AG04449 (cell line): ENCODE measurements at regions of chr4 and their contacts with region 1.

Region 1: DNA sequence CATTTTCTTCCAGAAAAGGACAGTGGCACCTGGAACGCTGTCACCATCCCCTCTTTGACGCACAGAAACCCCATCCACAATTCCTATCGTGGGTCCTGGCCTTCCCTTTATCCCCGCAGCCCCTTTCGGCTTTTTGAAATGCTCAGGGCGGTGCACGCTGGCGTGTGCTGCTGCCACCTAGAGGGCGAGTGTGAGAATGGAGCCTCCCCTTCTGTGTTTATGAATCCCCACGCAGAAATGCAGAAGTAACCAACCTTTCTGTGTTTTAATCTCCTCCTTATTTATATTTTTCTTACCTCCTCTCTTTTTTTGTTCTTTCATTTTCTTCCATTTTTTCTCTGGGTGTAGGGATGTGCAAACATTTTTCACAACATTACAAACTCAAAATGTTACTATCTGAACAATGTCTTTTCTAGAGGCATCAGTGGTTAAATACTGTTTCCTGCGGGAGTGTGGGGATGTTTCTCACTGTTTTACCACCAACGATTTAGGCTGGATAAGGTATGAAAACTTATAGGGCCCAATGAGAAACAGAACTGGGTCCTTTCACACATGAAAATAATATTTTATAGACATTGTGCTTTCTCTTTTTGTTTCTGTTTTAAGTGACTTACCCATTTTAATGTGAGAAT is 50.0 kb downstream of the TMA16 start:
- DNase-seq: no peak
- H3K4me3 ChIP-seq: peak overlapping the region; percentile 48
- CTCF ChIP-seq: peak; percentile 95

Region 2: DNA sequence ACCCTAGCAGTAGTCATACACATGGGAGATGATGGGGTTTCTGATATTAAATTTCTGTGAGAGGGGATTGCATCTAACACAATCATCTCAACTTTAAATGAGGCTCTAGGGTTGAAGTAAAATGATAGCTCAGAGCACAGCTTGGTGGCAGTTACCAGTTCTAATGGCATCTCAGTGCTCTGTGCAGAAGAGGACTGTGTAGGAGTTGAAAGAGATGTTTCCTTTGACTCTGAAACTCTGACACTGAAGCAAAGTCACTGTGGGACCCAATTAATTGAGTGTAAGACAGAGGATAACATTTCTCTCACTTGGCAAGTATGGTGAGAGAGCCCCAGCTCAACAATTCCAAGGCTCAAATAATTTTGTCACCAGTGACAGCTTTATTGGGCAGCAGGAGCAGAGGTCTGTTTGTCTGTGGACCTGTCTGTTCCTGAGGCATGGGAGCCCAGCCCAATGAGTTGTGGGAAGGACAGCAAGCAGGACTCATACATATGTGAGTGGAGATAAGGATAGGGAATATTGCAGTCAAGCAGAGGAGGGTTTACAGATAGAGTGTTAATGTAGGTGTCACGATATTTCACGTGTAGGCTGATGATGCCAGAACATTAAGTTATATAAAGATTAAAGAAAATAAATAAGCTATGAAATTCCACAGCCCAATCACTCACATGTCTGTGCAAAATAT is 301.1 kb before region 1 on chr4:
- CTCF ChIA-PET with region 1: no interaction called
- POLR2A ChIA-PET with region 1: no interaction called
- DNase-seq: no peak
- H3K4me3 ChIP-seq: no peak overlapping the region
- CTCF ChIP-seq: no peak

Region 3: GRCh38 chr4:163473576-163473975 is 70.9 kb before region 1 on chr4 and contains the start of gene TKTL2:
- CTCF ChIA-PET with region 1: interaction called, 19 read pairs
- POLR2A ChIA-PET with region 1: no interaction called
- DNase-seq: no peak
- H3K4me3 ChIP-seq: no peak within 1 kb of the TSS
- CTCF ChIP-seq: no peak

Region 4: DNA sequence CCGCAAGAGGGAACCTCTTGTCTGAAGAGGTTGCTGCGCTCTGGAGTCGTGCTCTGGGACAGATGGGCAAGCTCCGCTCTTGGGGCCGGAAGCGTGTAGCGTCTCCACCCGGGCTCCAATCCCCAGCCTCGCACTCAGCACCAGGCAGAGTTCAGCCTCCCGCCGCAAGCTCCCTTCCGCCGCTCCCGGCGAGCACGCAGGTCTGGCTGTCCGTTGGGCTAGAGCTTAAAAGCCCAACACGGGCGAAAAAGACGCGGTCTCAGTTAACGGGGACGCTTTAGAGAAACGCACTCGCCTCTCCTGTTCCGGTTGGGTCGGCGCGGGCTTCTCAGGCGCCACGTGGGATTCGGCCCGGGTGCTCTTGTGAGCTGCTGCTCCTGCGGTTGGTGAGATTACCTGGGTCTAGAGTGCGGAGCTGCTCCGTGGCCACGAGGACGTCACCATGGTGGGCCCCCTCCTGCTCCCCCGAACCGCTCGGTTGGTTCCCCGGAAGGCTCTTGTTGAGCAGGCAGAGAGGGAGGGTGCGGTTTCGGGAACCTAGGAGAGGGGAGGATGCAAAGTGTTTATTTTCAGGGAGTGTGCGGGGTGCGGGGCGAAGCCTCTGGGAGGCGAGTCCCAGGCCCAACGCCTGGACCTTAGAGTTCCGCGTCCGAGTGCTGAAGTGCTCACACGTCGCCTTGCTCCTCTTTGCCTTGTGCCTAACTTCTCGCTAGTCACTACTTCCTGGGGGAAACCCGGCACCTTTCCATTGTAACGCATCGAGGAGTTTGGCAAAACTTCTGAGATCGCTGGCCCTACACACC is 50.0 kb before region 1 on chr4 and contains the start of gene TMA16:
- CTCF ChIA-PET with region 1: interaction called, 59 read pairs
- POLR2A ChIA-PET with region 1: interaction called, 16 read pairs
- DNase-seq: peak; percentile 68
- H3K4me3 ChIP-seq: peak within 1 kb of the TSS; percentile 94
- CTCF ChIP-seq: no peak

Region 5: DNA sequence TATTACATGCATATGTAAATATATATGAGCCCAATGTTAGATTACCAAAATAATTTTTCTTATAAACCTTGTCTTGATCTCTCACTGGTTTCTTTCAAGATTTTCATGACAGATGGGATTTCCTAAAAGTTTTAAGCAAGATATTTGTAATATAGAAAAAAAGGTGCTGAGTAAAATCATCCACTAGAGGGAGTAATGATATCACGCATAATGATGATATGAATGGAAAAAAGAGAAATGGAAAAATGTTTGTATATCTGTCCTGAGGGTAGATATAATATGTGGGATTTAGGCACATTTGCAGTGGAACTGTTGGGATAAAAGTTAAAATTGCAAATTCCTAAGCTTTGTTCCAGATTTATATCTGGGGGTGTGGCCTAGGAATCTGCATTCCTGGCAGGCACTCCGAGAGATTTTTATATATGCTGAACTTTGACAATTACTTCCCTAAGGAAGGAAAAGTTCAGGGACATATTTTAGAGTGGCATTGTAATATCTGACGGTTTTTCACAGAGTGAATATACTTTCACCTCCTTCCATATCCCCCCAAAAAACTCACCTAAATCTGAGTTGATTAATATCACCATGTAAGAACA is 10.4 kb after region 1 on chr4:
- CTCF ChIA-PET with region 1: interaction called, 77 read pairs
- POLR2A ChIA-PET with region 1: no interaction called
- DNase-seq: no peak
- H3K4me3 ChIP-seq: no peak overlapping the region
- CTCF ChIP-seq: peak; percentile 32

Region 6: DNA sequence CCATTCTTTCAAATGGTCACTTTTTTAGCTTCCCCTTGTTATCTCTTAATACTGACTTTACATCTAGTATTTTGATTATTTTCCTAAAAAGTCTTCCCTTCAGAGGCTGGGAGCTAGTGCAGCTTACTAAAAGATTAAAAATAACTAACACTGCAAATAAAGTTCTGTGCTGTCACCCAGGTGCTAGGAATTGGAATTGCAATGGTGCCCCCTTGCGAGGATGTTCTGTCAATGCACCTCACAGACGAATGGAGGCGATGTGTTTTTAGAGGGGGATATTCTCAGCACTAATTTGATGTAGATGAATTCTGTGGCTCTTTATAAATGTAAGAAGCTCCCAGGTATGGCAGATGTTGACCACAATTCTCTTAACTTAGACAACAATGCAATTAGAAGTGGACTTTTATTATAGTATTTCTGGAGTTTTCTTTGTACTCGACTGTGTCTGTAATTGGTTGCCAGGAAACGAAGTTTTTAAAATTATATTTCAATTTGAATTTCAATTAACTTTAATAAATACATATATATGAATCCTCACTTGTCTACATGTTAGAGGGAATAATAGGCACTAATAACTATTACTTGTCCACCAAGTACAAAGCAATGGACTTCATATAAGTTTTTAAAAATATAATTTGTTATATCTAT is 1187.4 kb after region 1 on chr4:
- CTCF ChIA-PET with region 1: interaction called, 214 read pairs
- POLR2A ChIA-PET with region 1: no interaction called
- DNase-seq: no peak
- H3K4me3 ChIP-seq: no peak overlapping the region
- CTCF ChIP-seq: peak; percentile 71